ENCODE measurements at regions of chr2 and their contacts with region 1.

Region 1: DNA sequence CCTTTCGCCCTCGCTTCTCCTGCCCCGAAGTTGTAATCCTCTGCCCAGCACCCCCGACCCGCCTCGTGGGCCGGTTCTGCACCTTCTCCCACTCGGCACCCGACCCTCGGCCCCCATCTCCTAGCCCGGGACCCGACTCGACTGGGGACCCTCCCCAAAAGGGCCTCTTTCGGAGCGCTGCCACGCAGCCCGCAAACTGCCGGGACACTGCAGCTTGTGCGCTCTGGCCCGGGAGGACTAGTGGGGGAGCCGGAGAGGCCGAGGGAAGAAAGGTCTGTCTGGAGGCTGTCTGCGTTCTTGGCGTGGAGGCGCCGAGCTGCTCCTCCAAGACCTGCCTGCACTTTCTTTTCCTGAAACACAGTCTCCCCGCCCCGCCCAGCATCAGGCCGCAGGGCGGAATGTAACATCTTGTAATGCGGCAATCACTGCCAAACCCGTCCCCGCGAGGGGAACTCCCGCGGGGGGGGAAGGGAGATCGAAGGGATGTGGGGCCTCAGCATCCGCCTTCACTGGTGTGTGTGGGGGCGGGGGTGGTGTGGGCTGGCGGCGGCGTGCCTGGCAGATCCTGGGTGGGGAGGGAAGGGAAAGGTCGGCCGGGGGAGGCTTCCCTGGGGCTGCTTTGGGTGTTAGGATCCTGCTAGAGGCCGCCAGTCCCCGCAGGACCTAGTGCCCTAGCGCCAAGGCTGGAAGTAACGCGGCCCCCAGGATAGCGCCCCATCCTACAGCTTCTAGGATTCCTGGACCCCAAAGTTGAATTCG is 7.4 kb downstream of the DLX2 start:
- DNase-seq: peak; percentile 75
- ATAC-seq: peak; percentile 55
- H3K4me3 ChIP-seq: peak overlapping the region in 4 of 5 experiments; percentile 9 to 50 (median 28)
- H3K4me3 Mint-ChIP-seq: peak overlapping the region; percentile 90
- H3K27ac ChIP-seq: no peak overlapping the region
- H3K27ac Mint-ChIP-seq: peak overlapping the region; percentile 81
- H3K4me1 ChIP-seq: peaks cover 54 to 75% of the 10 kb centered on the region in 2 donors
- H3K4me1 Mint-ChIP-seq: peaks cover 30% of the 10 kb centered on the region
- H3K27me3 ChIP-seq: peaks cover 7 to 96% (median 84%) of the 10 kb centered on the region in 4 experiments
- H3K27me3 Mint-ChIP-seq: peaks cover 64% of the 10 kb centered on the region
- CTCF ChIP-seq: no peak

Region 2: GRCh38 chr2:172084734-172085459 is 10.4 kb before region 1 on chr2:
- CTCF ChIA-PET with region 1: interaction called, 3 read pairs
- POLR2A ChIA-PET with region 1: interaction called, 6 read pairs
- intact Hi-C with region 1: loop called (anchors 1 kb)
- DNase-seq: peak; percentile 64
- ATAC-seq: peak; percentile 22
- H3K4me3 ChIP-seq: peak overlapping the region; percentile 9 to 59 (median 43)
- H3K4me3 Mint-ChIP-seq: peak overlapping the region; percentile 79
- H3K27ac ChIP-seq: no peak overlapping the region
- H3K27ac Mint-ChIP-seq: peak overlapping the region; percentile 41
- H3K4me1 ChIP-seq: peaks cover 61 to 86% of the 10 kb centered on the region in 2 donors
- H3K4me1 Mint-ChIP-seq: peaks cover 46% of the 10 kb centered on the region
- H3K27me3 ChIP-seq: peaks cover 0 to 100% (median 96%) of the 10 kb centered on the region in 4 experiments
- H3K27me3 Mint-ChIP-seq: peaks cover 68% of the 10 kb centered on the region
- CTCF ChIP-seq: no peak

Measured in B cell (primary cell).